Transverse colon (tissue), 4 donors: ENCODE measurements at regions of chr4 and their contacts with region 1.

Region 1: DNA sequence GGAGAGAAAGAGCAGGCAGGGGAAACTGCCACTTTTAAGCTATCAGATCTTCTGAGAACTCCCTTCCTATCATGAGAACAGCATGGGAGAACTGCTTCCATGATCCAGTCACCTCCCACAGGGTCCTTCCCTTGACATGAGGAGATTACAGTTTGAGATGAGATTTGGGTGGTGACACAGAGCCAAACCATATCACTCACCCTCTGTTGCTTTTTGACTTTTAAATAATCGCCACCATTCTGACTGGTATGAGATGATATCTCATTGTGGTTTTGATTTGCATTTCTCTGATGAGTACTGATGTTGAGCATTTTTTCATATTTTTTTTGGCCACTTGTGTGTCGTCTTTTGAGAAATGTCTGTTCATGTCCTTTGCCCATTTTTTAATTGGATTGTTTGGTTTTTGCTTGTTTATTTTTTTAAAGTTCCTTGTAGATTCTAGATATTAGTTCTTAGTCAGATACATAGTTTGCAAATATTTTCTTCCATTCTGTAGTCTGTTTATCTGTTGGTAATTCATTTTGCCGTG is 6.5 kb upstream of the PAQR3 start:
- DNase-seq: no peak
- H3K4me3 ChIP-seq: no peak overlapping the region
- H3K27ac ChIP-seq: no peak overlapping the region
- H3K4me1 ChIP-seq: no peaks in the 10 kb centered on the region
- H3K27me3 ChIP-seq: no peaks in the 10 kb centered on the region
- CTCF ChIP-seq: no peak
- EP300 ChIP-seq: no peak
- POLR2A ChIP-seq: no peak

Region 2: DNA sequence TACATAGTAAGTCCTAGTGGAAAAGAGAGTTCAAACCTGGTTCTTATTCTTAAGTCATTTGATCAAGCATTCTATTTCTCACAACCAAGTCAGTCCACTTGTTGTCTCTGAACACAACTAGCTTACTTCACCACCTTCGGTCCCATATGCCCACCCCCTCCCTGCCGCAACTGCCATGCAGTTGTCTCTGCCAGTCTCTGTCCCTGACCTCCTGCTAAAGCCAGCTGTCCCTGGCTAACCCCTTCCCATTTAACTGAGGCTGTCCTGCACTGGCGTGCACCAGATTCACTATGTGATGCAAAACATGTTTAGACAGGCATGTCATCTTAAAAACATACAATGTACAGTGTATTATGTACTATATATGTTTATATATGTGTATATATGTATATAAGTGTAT is 875.9 kb before region 1 on chr4:
- in situ Hi-C with region 1: no loop called
- intact Hi-C with region 1: loop called (anchors 5 kb)
- DNase-seq: no peak
- H3K4me3 ChIP-seq: no peak overlapping the region
- H3K27ac ChIP-seq: no peak overlapping the region
- H3K4me1 ChIP-seq: peaks cover 0 to 3% (median 0%) of the 10 kb centered on the region in 4 donors
- H3K27me3 ChIP-seq: no peaks in the 10 kb centered on the region
- CTCF ChIP-seq: no peak
- EP300 ChIP-seq: no peak
- POLR2A ChIP-seq: no peak

Region 3: DNA sequence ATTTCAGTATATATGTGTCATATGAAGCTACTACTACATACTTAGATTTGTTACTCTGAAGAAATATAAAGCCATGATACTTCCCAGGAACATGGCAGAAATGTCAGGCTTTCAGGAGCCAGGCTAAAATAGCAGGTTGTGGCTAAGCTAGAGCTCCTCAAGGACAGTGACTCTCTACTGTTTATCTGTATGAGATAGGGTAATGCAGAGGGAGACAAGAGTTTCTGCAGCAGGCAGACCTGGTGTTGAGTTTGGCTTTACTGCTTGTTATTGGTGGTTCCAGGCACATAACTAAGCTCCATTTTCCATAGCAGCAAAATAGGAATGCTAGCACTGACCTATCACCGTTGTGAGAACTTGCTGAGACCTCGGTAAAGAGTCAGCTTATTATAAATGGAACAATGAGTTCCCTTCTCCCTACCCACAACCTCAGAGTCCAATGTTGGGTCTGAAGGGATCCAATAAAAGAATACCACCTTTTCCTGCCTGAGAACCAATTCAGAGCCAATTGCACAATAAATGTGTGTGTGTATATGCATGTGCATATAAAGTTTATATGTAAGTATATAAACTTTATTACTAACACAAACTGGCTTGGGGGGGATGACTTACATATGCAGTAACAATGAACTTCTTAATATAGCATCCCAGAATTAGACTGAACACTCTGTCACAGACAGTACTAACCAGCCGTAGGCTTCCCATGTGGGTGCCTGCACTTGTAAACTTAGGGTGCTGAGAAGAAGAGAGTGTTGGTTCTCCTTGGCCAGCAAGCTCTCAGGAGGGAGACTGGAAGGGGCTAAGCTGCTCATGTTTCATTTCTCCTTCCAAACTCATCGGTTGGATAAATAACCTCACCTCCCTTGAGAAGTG is 45.5 kb after region 1 on chr4:
- in situ Hi-C with region 1: no loop called
- intact Hi-C with region 1: no loop called
- DNase-seq: no peak
- H3K4me3 ChIP-seq: no peak overlapping the region
- H3K27ac ChIP-seq: no peak overlapping the region
- H3K4me1 ChIP-seq: no peaks in the 10 kb centered on the region
- H3K27me3 ChIP-seq: no peaks in the 10 kb centered on the region
- CTCF ChIP-seq: no peak
- EP300 ChIP-seq: no peak
- POLR2A ChIP-seq: no peak

Region 4: DNA sequence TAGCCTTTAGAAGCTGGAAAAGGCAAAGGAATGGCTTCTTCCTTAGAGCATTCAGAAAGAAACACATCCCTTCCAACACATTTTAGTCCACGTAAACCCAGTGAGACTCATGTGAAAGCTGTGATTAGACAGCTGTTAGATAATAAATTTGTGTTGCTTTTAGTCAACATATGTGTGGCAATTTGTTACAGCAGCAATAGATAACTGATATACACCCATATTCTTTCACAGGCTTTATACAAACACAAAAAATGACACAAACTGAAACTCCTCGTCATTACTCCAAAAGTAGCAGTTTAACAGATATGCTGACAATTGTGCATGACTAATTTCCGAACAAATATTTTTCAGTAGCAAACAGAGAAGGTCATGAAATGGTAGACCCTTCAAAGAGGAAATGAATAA is 1062.0 kb after region 1 on chr4:
- in situ Hi-C with region 1: no loop called
- intact Hi-C with region 1: no loop called
- DNase-seq: no peak
- H3K4me3 ChIP-seq: no peak overlapping the region
- H3K27ac ChIP-seq: no peak overlapping the region
- H3K4me1 ChIP-seq: peaks cover 0 to 12% (median 0%) of the 10 kb centered on the region in 4 donors
- H3K27me3 ChIP-seq: no peaks in the 10 kb centered on the region
- CTCF ChIP-seq: no peak
- EP300 ChIP-seq: no peak
- POLR2A ChIP-seq: no peak